ENCODE measurements at regions of chr12 and their contacts with region 1.

Region 1: DNA sequence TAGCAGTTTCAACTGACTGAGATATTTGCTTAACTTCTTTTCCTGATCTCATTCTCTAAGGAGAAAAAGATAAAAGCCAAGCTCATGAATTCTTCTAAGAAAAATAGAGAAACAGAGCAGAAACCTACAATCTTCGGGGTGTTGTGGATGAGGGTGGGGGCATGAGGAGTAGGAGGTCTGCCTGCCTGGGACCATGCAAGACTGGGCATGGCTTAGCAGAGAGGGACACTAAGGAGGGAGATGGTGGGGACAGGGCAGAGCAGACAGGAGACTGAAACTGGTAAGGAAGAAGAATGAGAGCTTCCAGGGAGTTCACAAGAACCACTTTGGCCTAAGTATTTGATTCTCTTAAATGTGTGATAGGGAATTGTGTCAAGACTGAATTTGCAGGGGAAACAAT is 188.0 kb downstream of the CFAP54 start:
- DNase-seq: no peak
- ATAC-seq: no peak

Region 2: GRCh38 chr12:97148941-97149559 is 471.7 kb after region 1 on chr12:
- intact Hi-C with region 1: loop called (anchors 5 kb)
- DNase-seq: peak; percentile 64
- ATAC-seq: peak; percentile 67

Measured in sciatic nerve (tissue), 2 donors.